K562 (cell line): ENCODE measurements at regions of chr7 and their contacts with region 1.

Region 1: GRCh38 chr7:107068156-107068555 is 23.7 kb downstream of the PRKAR2B start:
- DNase-seq: no peak
- ATAC-seq: no peak
- H3K4me3 ChIP-seq: no peak overlapping the region
- H3K27ac ChIP-seq: no peak overlapping the region
- H3K4me1 ChIP-seq: peaks cover 6 to 34% of the 10 kb centered on the region in 2 experiments; a peak in 3 of 5 replicates
- H3K27me3 ChIP-seq: no peaks in the 10 kb centered on the region
- CTCF ChIP-seq: no peak
- EP300 ChIP-seq: no peak
- POLR2A ChIP-seq: no peak
- RAD21 ChIP-seq: no peak

Region 2: GRCh38 chr7:107025449-107026103 is 42.6 kb before region 1 on chr7:
- CTCF ChIA-PET with region 1: no interaction called
- POLR2A ChIA-PET with region 1: no interaction called
- in situ Hi-C with region 1: no loop called
- intact Hi-C with region 1: no loop called
- DNase-seq: peak; percentile 63 to 89 (median 66)
- ATAC-seq: peak; percentile 79
- H3K4me3 ChIP-seq: no peak overlapping the region
- H3K27ac ChIP-seq: peak overlapping the region; percentile 54
- H3K4me1 ChIP-seq: peaks cover 40 to 55% of the 10 kb centered on the region in 2 experiments
- H3K27me3 ChIP-seq: no peaks in the 10 kb centered on the region
- CTCF ChIP-seq: no peak
- EP300 ChIP-seq: peak; percentile 86
- POLR2A ChIP-seq: no peak
- RAD21 ChIP-seq: peak in 1 of 2 experiments; percentile 25; a peak in 2 of 4 replicates

Region 3: DNA sequence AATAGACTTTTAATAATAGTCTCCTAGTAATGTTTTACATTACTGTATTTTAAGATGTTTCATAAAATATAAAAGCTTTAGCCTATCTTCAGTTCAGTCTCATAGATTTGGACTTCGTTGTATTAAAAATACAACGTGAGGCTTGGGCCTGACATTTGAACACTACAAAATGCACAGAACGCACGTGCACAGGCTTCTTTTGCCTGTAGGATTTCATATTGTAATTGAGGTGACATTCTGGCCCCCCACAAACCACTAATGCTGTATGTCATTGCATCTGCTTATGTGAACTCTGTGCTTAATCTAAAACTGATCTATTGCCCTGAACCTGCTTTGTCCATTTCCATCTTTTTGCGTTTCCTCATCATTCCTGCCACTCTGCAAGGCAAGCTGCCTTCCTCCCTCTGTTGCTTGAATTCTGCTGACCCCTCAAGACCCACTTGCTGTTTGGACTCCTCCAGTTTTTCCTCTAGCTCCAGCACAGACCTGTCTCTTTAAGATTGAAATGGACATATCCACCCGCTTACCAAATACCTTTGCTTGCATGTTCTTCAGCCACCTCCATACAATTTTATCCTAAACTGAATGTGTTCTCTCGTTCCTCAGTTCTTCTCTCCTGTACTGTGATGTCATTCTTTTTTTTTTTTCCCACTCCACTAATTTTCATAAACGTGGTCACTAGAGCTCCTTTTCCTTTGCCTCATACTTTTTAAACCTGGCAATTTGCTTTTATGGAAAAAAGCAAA is 11.3 kb before region 1 on chr7:
- CTCF ChIA-PET with region 1: no interaction called
- POLR2A ChIA-PET with region 1: interaction called, 16 read pairs
- in situ Hi-C with region 1: no loop called
- intact Hi-C with region 1: no loop called
- DNase-seq: peak in 1 of 4 experiments; percentile 47
- ATAC-seq: peak; percentile 67
- H3K4me3 ChIP-seq: peak overlapping the region; percentile 2; the same call in 1 of the 2 replicates
- H3K27ac ChIP-seq: peak overlapping the region; percentile 63
- H3K4me1 ChIP-seq: peaks cover 4 to 20% of the 10 kb centered on the region in 2 experiments; a peak in 4 of 5 replicates
- H3K27me3 ChIP-seq: no peaks in the 10 kb centered on the region
- CTCF ChIP-seq: no peak
- EP300 ChIP-seq: no peak
- POLR2A ChIP-seq: no peak
- RAD21 ChIP-seq: no peak

Region 4: DNA sequence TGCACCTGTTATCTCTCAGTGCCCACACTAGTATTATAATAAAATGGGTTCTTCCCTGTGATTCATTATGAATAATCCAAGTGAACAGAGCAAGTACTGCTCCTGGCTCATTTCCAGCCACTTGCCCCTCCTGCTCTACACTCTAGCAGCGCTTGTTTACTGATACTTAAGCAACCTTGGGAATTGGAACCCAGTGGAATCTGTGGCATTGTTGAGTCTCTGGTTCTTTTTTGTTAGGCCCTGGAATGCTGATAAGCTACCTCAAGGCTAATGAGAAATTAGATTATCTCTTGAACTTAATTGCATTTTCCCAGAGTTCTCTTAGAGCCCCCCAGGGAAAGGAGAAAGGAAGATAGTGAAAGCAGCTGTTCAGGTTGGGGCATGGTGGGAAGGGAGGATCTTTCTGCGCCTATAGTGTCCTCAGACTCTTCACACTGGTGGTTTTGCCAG is 10.4 kb after region 1 on chr7:
- CTCF ChIA-PET with region 1: no interaction called
- POLR2A ChIA-PET with region 1: interaction called, 44 read pairs
- in situ Hi-C with region 1: no loop called
- intact Hi-C with region 1: no loop called
- DNase-seq: peak; percentile 49 to 74 (median 61)
- ATAC-seq: peak; percentile 33
- H3K4me3 ChIP-seq: no peak overlapping the region
- H3K27ac ChIP-seq: peak overlapping the region; percentile 65
- H3K4me1 ChIP-seq: peaks cover 27 to 64% of the 10 kb centered on the region in 2 experiments
- H3K27me3 ChIP-seq: no peaks in the 10 kb centered on the region
- CTCF ChIP-seq: no peak
- EP300 ChIP-seq: no peak
- POLR2A ChIP-seq: no peak
- RAD21 ChIP-seq: no peak